WTC11 (cell line): ENCODE measurements at regions of chr11 and their contacts with region 1.

Region 1: DNA sequence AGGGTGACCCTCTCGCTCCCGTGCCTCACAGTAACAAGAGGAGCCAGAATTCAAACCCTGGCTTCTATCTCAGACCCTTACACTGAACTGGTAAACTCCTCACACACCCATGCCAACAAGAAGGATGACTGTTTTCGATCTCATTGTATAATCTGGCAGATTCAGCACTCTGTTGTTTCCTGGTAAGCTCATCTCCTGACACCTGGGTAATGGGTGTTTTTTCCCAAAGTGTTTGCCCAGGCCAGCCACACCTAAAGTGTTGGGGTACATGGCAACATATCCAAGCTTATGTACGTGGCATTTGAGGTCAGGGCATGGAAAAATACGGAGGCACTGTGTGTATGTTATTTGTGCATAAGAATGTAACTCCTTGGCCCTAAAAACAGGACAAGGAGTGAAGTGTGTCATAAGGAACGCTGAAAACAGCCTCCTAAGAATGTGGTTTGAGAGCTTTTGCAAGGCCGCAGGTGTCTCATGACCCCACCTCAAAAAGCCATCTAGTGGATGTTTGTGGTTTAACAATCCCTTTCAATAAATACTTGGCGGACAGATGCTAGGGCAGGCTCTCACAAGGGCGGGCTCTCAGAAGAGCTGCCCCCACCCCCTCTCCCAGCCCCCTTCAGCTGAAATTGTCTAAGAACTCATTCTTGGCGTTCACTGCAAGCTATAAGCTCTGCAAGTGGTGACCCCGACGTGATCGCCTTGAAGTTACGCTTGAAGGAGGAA is at the start of gene MS4A15:
- DNase-seq: no peak
- ATAC-seq: peak; percentile 91
- H3K4me3 Mint-ChIP-seq: no peak within 1 kb of the TSS
- H3K27ac Mint-ChIP-seq: peak within 1 kb of the TSS; percentile 73; the same call in 1 of the 2 replicates
- H3K4me1 Mint-ChIP-seq: peaks cover 6% of the 10 kb centered on the region
- H3K27me3 Mint-ChIP-seq: no peaks in the 10 kb centered on the region
- CTCF ChIP-seq: peak; percentile 49; the same call in 1 of the 2 replicates
- total RNA-seq, gene MS4A15: 0.09 to 0.41 TPM (median 0.39 TPM) in 3 replicates

Region 2: DNA sequence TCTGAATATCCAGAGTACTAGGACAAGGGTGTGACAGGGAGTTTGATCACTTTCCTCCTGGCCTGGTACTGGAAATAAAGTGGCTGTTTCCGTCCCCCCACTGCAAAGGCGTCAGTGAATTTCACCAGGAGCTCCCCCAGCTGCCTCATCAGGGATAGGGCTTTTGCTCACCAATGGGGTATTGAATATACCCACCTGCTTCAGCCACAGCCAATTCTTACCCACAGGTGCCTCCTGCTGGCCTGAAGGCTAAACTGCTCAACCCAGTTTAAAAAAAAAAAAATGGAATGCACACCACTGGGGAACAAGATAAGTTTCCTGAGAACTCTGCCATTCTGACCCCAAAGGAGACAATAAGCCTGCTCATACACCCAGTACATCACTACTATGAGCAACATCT is 122.3 kb before region 1 on chr11:
- CTCF ChIA-PET with region 1: no interaction called
- POLR2A ChIA-PET with region 1: no interaction called
- DNase-seq: peak; percentile 57
- ATAC-seq: peak; percentile 99
- H3K4me3 Mint-ChIP-seq: no peak overlapping the region
- H3K27ac Mint-ChIP-seq: no peak overlapping the region
- H3K4me1 Mint-ChIP-seq: no peaks in the 10 kb centered on the region
- H3K27me3 Mint-ChIP-seq: peaks cover 7% of the 10 kb centered on the region; the same call in 1 of the 2 replicates
- CTCF ChIP-seq: peak; percentile 58; the same call in 1 of the 2 replicates

Region 3: GRCh38 chr11:60680455-60681119 is 75.9 kb before region 1 on chr11:
- CTCF ChIA-PET with region 1: no interaction called
- POLR2A ChIA-PET with region 1: no interaction called
- DNase-seq: no peak
- ATAC-seq: no peak
- H3K4me3 Mint-ChIP-seq: no peak overlapping the region
- H3K27ac Mint-ChIP-seq: no peak overlapping the region
- H3K4me1 Mint-ChIP-seq: no peaks in the 10 kb centered on the region
- H3K27me3 Mint-ChIP-seq: peaks cover 14% of the 10 kb centered on the region
- CTCF ChIP-seq: no peak

Region 4: DNA sequence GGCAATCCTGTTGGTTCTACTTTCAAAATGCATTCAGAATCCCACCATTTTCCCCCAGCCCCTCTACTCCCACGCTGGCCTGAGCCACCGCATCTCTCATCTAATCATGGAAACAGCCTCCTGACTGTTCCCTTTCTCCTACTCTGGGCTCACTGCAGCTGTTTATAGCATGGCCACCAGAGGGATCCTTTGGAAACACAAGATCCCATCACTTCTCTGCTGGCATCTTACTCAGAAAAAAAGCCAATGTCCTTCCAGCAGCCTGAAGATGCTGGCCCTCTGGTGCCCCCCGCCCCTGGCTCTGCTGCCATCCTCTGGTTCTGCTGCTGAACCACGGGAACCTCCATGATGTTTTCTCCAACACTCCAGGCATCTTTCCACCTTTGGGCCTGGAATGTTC is 46.0 kb before region 1 on chr11:
- CTCF ChIA-PET with region 1: interaction called, 14 read pairs
- POLR2A ChIA-PET with region 1: no interaction called
- DNase-seq: peak; percentile 25
- ATAC-seq: peak; percentile 90
- H3K4me3 Mint-ChIP-seq: no peak overlapping the region
- H3K27ac Mint-ChIP-seq: no peak overlapping the region
- H3K4me1 Mint-ChIP-seq: 0 out of 2 replicates have a peak, but pooled peaks cover 3% of the 10 kb centered on the region
- H3K27me3 Mint-ChIP-seq: no peaks in the 10 kb centered on the region; the same call in 1 of the 2 replicates
- CTCF ChIP-seq: no peak

Region 5: DNA sequence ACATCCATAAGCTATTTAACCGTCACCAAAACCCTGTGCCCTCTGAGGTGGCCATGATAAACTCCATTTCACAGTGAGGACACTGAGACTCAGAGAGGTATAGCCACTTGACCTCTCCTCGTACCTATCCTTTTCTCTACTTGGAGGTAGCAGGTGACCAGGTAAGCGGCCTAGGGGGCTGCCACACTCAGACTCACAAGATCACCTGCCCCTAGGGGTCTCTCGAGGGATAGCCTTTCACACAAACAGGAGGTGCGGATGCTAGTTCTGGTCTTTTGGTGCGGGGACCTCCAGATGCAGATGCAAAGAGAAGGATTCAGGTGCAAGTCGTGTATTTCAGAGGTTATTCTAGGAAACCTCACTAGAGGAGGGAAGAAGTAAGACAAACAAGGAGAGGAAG is 17.4 kb before region 1 on chr11:
- CTCF ChIA-PET with region 1: interaction called, 15 read pairs
- POLR2A ChIA-PET with region 1: no interaction called
- DNase-seq: peak; percentile 49
- ATAC-seq: peak; percentile 98
- H3K4me3 Mint-ChIP-seq: no peak overlapping the region
- H3K27ac Mint-ChIP-seq: no peak overlapping the region
- H3K4me1 Mint-ChIP-seq: no peaks in the 10 kb centered on the region
- H3K27me3 Mint-ChIP-seq: no peaks in the 10 kb centered on the region
- CTCF ChIP-seq: peak; percentile 51